ENCODE measurements at regions of chr20 and their contacts with region 1.

Region 1: DNA sequence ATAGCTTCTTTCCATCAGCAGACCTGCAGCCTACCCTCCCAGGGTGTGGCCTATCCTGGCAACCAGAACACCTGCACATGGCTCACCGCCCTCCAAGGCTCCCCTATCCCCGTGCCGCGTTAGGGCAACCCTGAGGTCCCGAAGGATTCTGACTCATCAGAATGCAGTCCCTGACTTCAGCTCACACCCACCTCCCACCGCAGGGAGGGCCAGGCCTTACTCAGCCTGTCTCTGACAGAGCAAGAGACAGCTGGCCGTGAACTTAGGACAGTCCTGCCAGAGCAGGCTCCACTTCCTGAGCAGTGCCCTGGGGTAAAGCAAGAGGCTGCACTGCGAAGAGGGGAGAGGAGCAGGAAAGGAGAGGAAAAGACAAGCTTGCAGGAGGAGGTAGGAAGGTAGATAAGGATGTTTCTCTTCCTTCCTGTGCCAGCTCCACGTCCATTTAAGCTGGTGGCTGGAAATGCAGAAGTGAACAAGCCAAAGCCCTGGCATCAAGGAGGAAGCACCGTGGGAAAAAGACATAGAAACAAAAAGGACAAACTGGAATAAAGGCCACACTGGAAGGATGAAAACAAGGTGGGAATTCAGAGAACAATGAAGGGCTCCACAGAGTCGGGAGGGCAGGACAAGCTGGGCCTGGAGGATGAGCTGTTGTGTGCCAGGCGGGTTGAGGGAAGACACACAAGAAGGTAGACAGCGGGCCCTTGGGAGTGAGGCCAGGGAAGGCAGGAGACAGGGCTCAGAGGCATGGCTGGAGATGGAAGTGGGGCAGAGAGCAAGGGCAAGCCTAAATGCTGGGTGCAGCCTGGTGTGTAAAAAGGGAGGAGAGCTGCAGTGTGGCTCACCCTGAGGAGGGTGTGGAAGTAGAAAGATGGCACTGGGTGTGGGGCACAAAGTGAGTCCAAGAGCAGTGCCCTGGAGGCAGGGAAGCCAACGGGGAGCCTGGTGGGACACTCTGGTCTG is 102.7 kb downstream of the SLC23A2 start:
- DNase-seq: peak; percentile 98
- H3K4me3 ChIP-seq: no peak overlapping the region
- H3K27ac ChIP-seq: peak overlapping the region; percentile 45
- H3K4me1 ChIP-seq: peaks cover 28% of the 10 kb centered on the region
- H3K27me3 ChIP-seq: no peaks in the 10 kb centered on the region
- CTCF ChIP-seq: no peak

Region 2: DNA sequence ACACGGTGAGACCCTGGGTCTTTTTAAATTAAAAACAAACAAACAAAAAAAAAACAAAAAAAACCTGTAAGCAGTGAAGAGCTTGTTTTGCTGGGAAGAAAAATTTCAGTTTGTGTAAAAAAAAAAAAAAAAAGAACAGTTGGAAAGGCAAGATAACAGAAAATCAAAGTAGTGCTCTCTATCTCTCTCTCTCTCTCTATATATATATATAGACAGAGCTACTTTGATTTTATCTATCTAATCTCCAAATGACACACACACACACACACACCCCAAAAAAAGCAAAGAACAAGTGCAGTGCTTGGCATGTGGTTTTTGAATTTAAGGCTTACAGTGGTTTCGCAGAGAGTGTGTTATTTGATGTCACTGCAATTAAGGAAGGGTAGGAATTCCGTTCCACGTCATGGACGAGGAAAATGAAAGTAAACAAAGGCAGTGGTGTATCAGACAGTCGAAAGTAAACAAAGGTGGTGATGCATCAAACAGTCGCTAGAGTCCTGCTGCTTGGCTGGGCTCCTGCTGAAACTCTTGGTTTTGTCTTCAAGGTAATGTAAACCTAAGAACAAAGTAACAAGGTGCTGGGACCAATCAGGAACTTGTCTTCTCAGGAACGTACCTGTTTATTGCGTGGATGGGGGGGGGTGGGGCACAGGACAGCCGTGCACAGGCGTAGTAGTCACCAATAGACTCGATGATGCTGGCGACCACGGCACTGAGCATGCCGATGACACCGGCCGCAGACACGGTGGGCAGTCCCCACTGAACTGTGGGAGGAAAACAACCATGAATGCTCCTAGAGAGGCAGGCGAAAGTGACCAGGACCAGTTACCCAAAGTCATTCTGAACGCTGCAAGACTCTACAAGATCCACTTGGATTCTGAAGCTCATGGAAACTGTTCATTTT is 29.0 kb before region 1 on chr20:
- CTCF ChIA-PET with region 1: interaction called, 18 read pairs
- dilution Hi-C with region 1: no loop called
- in situ Hi-C with region 1: no loop called
- intact Hi-C with region 1: no loop called
- DNase-seq: no peak
- H3K4me3 ChIP-seq: no peak overlapping the region
- H3K27ac ChIP-seq: no peak overlapping the region
- H3K4me1 ChIP-seq: no peaks in the 10 kb centered on the region
- H3K27me3 ChIP-seq: no peaks in the 10 kb centered on the region
- CTCF ChIP-seq: no peak

Region 3: GRCh38 chr20:5181956-5182355 is 283.4 kb after region 1 on chr20:
- CTCF ChIA-PET with region 1: no interaction called
- dilution Hi-C with region 1: no loop called
- in situ Hi-C with region 1: no loop called
- intact Hi-C with region 1: no loop called
- DNase-seq: peak; percentile 6
- H3K4me3 ChIP-seq: no peak overlapping the region
- H3K27ac ChIP-seq: no peak overlapping the region
- H3K4me1 ChIP-seq: peaks cover 3% of the 10 kb centered on the region
- H3K27me3 ChIP-seq: no peaks in the 10 kb centered on the region
- CTCF ChIP-seq: no peak